ENCODE measurements at regions of chr15 and their contacts with region 1.

Region 1: DNA sequence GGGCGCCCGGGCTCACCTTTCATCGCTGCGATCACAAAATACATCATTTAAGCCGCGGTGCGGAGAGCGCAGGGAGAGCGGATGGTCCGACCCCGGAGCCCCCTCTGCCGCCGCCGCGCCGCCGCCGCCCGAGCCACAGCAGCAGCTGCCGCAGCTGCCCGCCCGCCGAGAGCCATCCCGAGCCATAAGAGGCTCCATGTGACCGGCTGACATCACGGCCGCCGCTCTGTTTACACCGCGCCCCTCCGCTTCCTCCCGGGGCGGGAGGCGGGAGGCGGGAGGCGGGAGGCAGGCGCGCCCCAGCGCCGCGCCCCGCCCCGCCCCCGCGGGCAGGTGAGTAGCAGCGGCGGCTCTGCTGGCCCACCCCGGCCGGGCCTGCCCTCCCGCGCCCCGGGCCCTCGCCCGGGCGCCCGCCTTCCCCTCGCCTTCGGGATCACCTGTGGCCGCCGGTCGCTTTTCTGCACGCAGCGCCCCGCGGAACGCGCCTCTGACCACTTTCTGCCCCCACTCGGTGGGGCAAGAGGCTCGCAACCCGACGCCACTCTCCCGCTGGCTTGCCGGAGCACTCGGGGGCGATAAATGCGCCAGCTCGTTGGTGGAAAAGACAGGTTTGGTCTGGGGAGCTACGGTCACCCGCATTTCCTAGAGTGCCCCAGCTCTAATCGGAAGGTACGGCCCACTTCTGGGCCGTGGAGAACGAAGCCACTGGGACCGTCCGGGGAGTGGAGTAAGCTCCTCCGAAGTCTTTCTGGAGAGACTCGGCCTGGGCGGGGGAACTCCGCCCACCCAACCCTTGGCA is 113.6 kb upstream of the ICE2 start:
- DNase-seq: peak; percentile 87 to 88
- ATAC-seq: peak; percentile 94

Region 2: GRCh38 chr15:60507596-60508424 is 84.8 kb before region 1 on chr15:
- intact Hi-C with region 1: no loop called
- DNase-seq: peak in 1 of 2 donors; percentile 21
- ATAC-seq: peak; percentile 84

Region 3: GRCh38 chr15:60905587-60905986 is 313.0 kb after region 1 on chr15:
- intact Hi-C with region 1: no loop called
- DNase-seq: no peak
- ATAC-seq: no peak

Region 4: DNA sequence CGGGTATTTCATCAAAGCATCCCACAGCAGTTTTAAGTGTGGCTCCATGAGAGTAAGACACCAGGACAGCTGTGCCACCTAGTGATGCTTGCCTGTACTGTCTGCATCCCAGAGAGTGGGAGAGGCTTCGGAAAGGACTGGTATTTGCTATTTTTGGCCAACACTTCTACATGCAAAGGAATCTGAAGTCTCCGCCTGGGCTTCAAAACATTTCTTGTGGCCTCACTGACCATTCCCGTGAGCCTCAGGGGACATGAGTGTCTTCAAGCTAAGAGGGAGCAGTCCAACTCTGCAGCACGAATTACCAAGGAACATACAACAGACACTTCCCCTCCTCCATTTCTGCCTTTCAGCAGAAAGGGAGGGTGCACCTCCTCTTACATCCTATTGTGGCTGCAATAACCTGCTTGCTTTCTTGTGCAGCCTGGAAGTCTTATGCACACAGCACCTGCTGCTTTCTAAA is 459.0 kb after region 1 on chr15:
- intact Hi-C with region 1: loop called in 1 of 2 experiments (anchors 10 kb)
- DNase-seq: no peak
- ATAC-seq: peak; percentile 76